Activated CD8-positive, alpha-beta T cell treated with anti-CD3 and anti-CD28 coated beads, Interleukin-2, amount 10 ng/mL, durations not matched to agents 7 days and 5 days (primary cell): ENCODE measurements at regions of chr10 and their contacts with region 1.

Region 1: GRCh38 chr10:79374312-79375191 is 27.3 kb downstream of the PPIF start:
- DNase-seq: peak; percentile 80
- ATAC-seq: peak; percentile 78
- H3K4me3 Mint-ChIP-seq: no peak overlapping the region
- H3K27ac Mint-ChIP-seq: no peak overlapping the region
- H3K4me1 Mint-ChIP-seq: peaks cover 4% of the 10 kb centered on the region
- H3K27me3 Mint-ChIP-seq: peaks cover 11% of the 10 kb centered on the region

Region 2: DNA sequence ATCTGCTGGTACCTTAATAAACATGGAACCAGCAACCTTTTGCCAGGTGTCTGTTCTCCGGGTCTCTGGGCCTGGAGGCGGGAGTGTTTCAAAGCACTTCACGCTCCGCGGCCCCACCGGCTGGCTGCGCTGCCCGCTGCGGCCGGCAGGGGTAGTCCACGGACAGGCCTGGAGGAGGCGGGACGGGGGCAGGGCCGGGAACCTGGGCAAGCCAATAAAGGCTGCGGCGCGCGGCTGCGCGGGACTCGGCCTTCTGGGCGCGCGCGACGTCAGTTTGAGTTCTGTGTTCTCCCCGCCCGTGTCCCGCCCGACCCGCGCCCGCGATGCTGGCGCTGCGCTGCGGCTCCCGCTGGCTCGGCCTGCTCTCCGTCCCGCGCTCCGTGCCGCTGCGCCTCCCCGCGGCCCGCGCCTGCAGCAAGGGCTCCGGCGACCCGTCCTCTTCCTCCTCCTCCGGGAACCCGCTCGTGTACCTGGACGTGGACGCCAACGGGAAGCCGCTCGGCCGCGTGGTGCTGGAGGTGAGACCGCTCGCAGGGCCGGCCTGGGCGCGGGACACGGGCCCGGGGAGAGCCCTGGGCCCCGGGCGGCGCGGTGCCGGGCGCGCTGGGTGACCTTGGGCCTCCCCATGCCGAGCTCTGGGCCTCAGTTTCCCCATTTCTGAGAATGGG is 27.2 kb before region 1 on chr10 and contains the start of gene PPIF:
- CTCF ChIA-PET with region 1: interaction called, 15 read pairs
- POLR2A ChIA-PET with region 1: no interaction called
- DNase-seq: peak; percentile 95
- ATAC-seq: peak; percentile 88
- H3K4me3 Mint-ChIP-seq: peak within 1 kb of the TSS; percentile 86
- H3K27ac Mint-ChIP-seq: peak within 1 kb of the TSS; percentile 92
- H3K4me1 Mint-ChIP-seq: peaks cover 73% of the 10 kb centered on the region
- H3K27me3 Mint-ChIP-seq: no peaks in the 10 kb centered on the region
- total RNA-seq, gene PPIF: 74.7 to 77.7 TPM

Region 3: DNA sequence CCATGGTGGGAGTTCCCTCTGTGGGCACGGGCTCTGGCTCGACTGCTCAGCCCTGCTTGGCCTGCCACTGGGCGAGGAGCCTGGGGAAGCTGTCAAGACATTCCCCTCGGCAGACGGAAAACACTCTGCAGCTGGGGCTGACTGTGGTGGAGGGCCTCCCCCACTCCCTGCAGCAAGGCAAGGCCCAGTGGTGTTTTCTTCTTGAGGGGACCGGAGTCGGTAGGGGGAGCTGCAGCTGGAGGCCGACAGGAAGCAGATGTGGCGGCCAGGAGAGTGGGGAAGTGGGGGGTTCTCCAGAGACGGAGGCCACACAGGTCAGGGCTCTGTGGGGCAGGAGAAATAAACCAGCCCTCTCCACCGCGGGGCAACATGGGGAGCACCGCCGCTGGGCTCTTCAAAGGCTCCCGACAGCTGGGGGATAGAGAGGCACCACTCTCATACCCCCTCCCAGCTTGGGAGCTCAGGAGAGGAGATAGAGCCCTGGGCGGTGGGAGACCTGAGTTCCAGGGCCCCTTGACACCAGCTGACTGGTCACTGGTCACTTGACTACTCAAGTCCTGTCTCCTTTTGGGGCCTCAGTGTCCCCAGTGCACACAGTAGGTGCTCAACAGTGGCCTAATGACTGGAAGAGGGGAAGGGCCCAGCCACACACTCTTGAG is 16.1 kb after region 1 on chr10:
- CTCF ChIA-PET with region 1: interaction called, 36 read pairs
- POLR2A ChIA-PET with region 1: no interaction called
- DNase-seq: no peak
- ATAC-seq: peak; percentile 34
- H3K4me3 Mint-ChIP-seq: no peak overlapping the region
- H3K27ac Mint-ChIP-seq: no peak overlapping the region
- H3K4me1 Mint-ChIP-seq: peaks cover 5% of the 10 kb centered on the region
- H3K27me3 Mint-ChIP-seq: no peaks in the 10 kb centered on the region

Region 4: GRCh38 chr10:79422178-79422892 is 47.8 kb after region 1 on chr10:
- CTCF ChIA-PET with region 1: no interaction called
- POLR2A ChIA-PET with region 1: no interaction called
- DNase-seq: no peak
- ATAC-seq: no peak
- H3K4me3 Mint-ChIP-seq: no peak overlapping the region
- H3K27ac Mint-ChIP-seq: no peak overlapping the region
- H3K4me1 Mint-ChIP-seq: no peaks in the 10 kb centered on the region
- H3K27me3 Mint-ChIP-seq: no peaks in the 10 kb centered on the region

Region 5: GRCh38 chr10:79473496-79474095 is 99.0 kb after region 1 on chr10:
- CTCF ChIA-PET with region 1: interaction called, 38 read pairs
- POLR2A ChIA-PET with region 1: no interaction called
- DNase-seq: no peak
- ATAC-seq: no peak
- H3K4me3 Mint-ChIP-seq: no peak overlapping the region
- H3K27ac Mint-ChIP-seq: no peak overlapping the region
- H3K4me1 Mint-ChIP-seq: no peaks in the 10 kb centered on the region
- H3K27me3 Mint-ChIP-seq: peaks cover 24% of the 10 kb centered on the region

Region 6: GRCh38 chr10:79507440-79508167 is 133.1 kb after region 1 on chr10:
- CTCF ChIA-PET with region 1: interaction called, 14 read pairs
- POLR2A ChIA-PET with region 1: no interaction called
- DNase-seq: no peak
- ATAC-seq: no peak
- H3K4me3 Mint-ChIP-seq: no peak overlapping the region
- H3K27ac Mint-ChIP-seq: no peak overlapping the region
- H3K4me1 Mint-ChIP-seq: peaks cover 14% of the 10 kb centered on the region
- H3K27me3 Mint-ChIP-seq: peaks cover 25% of the 10 kb centered on the region